ENCODE measurements at regions of chr2 and their contacts with region 1.

Region 1: DNA sequence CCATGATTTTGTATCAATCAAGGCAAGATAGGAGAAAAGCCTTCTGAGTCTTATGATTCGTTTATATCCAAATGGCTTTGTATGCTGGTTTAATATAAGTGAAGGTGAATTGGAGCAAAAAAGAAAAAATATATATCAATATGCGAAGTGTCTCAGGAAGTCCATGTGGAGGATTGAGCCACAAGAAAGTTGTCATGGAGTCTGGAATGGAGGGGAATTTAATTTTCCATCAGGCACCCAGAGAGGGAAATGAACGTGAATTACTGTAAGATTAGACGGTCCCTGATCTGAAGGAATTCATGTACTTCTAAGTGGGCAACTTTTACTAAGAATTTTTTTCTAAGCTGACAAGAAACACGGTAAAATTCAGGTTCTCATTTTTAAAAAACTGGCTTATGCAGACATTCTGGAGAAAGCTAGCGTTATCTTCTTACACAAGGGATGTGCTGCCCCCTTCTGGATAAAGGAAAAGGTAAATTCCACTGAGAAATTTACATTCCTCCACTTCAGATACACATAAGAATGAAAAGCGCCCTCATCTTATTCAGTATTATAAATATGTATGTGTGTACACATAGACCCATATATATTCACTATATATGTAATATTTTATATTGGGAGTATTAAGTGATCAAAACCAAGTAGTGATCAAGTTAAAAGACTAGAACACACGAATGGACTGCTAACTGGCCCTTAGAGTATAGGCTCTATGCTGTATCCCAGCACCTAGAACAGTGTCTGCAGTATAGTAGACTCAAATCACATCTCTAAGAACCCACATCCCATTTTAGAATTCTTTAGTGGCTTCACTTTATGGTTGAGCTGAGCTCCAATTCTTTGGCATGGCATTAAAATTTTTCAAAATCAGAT is 289.0 kb upstream of the TFPI start:
- DNase-seq: peak; percentile 64
- ATAC-seq: peak; percentile 89
- H3K4me3 ChIP-seq: no peak overlapping the region; a peak in 1 of 6 replicates
- H3K27ac ChIP-seq: no peak overlapping the region
- H3K4me1 ChIP-seq: no peaks in the 10 kb centered on the region
- H3K27me3 ChIP-seq: no peaks in the 10 kb centered on the region
- CTCF ChIP-seq: peak; percentile 76
- EP300 ChIP-seq: no peak
- POLR2A ChIP-seq: no peak
- RAD21 ChIP-seq: peak; percentile 53

Region 2: GRCh38 chr2:186862869-186863709 is 980.1 kb before region 1 on chr2:
- CTCF ChIA-PET with region 1: interaction called, 12 read pairs
- POLR2A ChIA-PET with region 1: no interaction called
- in situ Hi-C with region 1: loop called (anchors 25 kb)
- intact Hi-C with region 1: loop called (anchors 1 kb)
- DNase-seq: peak; percentile 23
- ATAC-seq: peak; percentile 75
- H3K4me3 ChIP-seq: no peak overlapping the region
- H3K27ac ChIP-seq: no peak overlapping the region
- H3K4me1 ChIP-seq: no peaks in the 10 kb centered on the region
- H3K27me3 ChIP-seq: no peaks in the 10 kb centered on the region
- CTCF ChIP-seq: peak; percentile 77
- EP300 ChIP-seq: no peak
- POLR2A ChIP-seq: no peak
- RAD21 ChIP-seq: peak; percentile 39; the same call in 1 of the 2 replicates

Region 3: DNA sequence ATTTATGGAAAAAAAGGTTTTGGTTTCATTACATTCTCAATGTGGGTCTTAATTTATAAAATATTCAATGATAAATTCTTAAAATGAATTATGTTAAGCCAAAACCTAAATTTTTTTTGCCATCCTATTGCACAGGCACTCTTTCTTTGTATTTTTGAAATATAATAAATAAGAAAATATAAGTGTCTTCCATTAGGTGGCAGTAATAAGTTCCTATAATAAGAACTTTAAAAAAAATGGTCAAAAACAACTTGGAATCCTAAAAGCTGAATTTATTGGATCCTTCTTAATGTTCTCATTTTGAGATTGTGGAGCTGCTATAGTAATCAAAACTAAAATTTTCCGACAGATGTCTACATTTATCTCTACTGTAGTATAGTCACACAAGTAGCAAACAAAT is 400.8 kb before region 1 on chr2:
- CTCF ChIA-PET with region 1: interaction called, 5 read pairs
- POLR2A ChIA-PET with region 1: no interaction called
- in situ Hi-C with region 1: no loop called
- intact Hi-C with region 1: loop called (anchors 5 kb)
- DNase-seq: no peak
- ATAC-seq: no peak
- H3K4me3 ChIP-seq: no peak overlapping the region
- H3K27ac ChIP-seq: no peak overlapping the region
- H3K4me1 ChIP-seq: no peaks in the 10 kb centered on the region
- H3K27me3 ChIP-seq: no peaks in the 10 kb centered on the region
- CTCF ChIP-seq: no peak
- EP300 ChIP-seq: no peak
- POLR2A ChIP-seq: no peak
- RAD21 ChIP-seq: no peak

Region 4: DNA sequence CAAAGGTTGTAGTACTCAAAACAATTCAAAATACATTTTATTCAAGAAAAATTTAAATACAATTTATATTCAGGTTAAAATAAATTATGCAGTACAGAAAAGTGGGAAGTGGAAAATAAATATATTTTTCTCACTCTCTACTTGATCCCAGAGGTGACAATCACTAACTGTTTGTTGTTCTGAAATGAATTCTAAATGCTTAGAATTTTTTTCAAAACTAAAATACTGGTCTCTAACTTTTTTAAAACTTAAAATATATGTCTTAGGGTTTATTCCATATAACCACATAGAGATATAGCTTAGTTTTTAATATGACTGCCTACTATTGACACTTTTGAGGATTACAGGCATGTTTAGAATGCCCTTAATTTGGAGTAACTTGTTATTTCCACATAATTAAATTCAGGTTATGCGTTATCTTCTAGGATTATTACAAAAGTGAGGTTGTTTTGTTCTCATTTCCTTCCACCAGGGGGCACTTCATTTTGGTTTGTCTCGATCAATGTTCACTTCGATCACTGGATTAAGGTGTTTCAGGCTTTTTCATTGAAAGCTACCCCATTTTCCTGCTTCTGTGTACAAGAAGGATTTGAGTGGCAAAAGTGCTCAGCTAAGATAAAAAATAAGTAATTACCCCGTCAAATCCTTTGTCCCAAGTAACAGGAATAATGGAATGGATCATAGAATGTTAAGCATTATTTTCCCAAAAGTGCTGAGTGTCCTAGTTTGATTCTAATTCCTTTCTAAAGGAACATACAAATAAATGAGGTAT is 261.9 kb before region 1 on chr2:
- CTCF ChIA-PET with region 1: interaction called, 42 read pairs
- POLR2A ChIA-PET with region 1: no interaction called
- in situ Hi-C with region 1: loop called (anchors 5 kb)
- intact Hi-C with region 1: loop called (anchors 1 kb)
- DNase-seq: peak; percentile 59
- ATAC-seq: peak; percentile 18; the same call in 1 of the 3 replicates
- H3K4me3 ChIP-seq: peak overlapping the region; percentile 21 to 60 (median 51); a peak in 5 of 6 replicates
- H3K27ac ChIP-seq: no peak overlapping the region
- H3K4me1 ChIP-seq: peaks cover 33% of the 10 kb centered on the region
- H3K27me3 ChIP-seq: no peaks in the 10 kb centered on the region
- CTCF ChIP-seq: peak; percentile 79
- EP300 ChIP-seq: no peak
- POLR2A ChIP-seq: no peak
- RAD21 ChIP-seq: no peak; the same call in 1 of the 2 replicates

Region 5: DNA sequence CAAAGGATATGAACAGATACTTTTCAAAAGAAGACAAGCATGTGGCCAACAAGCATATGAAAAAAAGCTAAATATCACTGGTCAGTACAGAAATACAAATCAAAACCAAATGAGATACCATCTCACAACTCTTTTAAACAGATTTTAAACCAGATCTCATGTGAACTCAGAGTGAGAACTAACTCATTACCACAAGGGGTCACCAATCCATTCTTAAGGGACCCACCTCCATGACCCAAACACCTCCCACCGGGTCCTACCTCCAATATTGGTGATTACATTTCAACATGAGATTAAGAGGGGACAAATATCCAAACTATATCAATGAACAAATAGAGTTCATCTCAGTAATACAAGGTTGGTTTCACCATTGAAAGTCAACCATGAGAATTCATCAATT is 128.7 kb after region 1 on chr2:
- CTCF ChIA-PET with region 1: no interaction called
- POLR2A ChIA-PET with region 1: no interaction called
- in situ Hi-C with region 1: no loop called
- intact Hi-C with region 1: no loop called
- DNase-seq: no peak
- ATAC-seq: no peak
- H3K4me3 ChIP-seq: no peak overlapping the region
- H3K27ac ChIP-seq: no peak overlapping the region
- H3K4me1 ChIP-seq: no peaks in the 10 kb centered on the region
- H3K27me3 ChIP-seq: no peaks in the 10 kb centered on the region
- CTCF ChIP-seq: no peak
- EP300 ChIP-seq: no peak
- POLR2A ChIP-seq: no peak
- RAD21 ChIP-seq: no peak

Region 6: DNA sequence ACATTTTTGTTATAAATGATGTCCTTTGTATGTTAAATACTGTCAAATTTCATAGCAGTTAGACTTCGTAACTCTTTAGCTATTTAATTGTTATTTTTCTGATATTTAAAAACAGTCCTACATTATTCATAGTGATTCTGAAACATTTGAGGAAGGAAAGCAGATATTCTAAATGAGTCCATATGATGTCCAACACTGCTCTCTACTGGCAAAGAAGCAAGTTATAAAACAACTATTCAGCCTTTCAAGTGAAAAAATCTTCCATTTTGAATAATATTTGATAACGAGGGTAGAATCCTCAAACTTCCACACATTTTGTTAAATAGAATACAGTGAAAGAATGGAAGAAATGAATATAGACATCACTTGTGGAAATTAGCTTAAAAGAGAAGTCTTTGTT is 669.2 kb after region 1 on chr2:
- CTCF ChIA-PET with region 1: no interaction called
- POLR2A ChIA-PET with region 1: no interaction called
- in situ Hi-C with region 1: no loop called
- intact Hi-C with region 1: loop called (anchors 10 kb)
- DNase-seq: peak; percentile 33
- ATAC-seq: peak; percentile 56
- H3K4me3 ChIP-seq: no peak overlapping the region
- H3K27ac ChIP-seq: no peak overlapping the region
- H3K4me1 ChIP-seq: no peaks in the 10 kb centered on the region
- H3K27me3 ChIP-seq: no peaks in the 10 kb centered on the region
- CTCF ChIP-seq: peak; percentile 61
- EP300 ChIP-seq: no peak
- POLR2A ChIP-seq: no peak
- RAD21 ChIP-seq: no peak